ENCODE measurements at regions of chr20 and their contacts with region 1.

Region 1: GRCh38 chr20:51456511-51457509 is 85.7 kb downstream of the NFATC2 start:
- DNase-seq: peak; percentile 94
- H3K4me3 ChIP-seq: no peak overlapping the region
- H3K27ac ChIP-seq: peak overlapping the region; percentile 55 to 62
- H3K4me1 ChIP-seq: peaks cover 11% of the 10 kb centered on the region
- H3K27me3 ChIP-seq: no peaks in the 10 kb centered on the region
- CTCF ChIP-seq: peak in 1 of 4 experiments; percentile 11
- POLR2A ChIP-seq: no peak

Region 2: DNA sequence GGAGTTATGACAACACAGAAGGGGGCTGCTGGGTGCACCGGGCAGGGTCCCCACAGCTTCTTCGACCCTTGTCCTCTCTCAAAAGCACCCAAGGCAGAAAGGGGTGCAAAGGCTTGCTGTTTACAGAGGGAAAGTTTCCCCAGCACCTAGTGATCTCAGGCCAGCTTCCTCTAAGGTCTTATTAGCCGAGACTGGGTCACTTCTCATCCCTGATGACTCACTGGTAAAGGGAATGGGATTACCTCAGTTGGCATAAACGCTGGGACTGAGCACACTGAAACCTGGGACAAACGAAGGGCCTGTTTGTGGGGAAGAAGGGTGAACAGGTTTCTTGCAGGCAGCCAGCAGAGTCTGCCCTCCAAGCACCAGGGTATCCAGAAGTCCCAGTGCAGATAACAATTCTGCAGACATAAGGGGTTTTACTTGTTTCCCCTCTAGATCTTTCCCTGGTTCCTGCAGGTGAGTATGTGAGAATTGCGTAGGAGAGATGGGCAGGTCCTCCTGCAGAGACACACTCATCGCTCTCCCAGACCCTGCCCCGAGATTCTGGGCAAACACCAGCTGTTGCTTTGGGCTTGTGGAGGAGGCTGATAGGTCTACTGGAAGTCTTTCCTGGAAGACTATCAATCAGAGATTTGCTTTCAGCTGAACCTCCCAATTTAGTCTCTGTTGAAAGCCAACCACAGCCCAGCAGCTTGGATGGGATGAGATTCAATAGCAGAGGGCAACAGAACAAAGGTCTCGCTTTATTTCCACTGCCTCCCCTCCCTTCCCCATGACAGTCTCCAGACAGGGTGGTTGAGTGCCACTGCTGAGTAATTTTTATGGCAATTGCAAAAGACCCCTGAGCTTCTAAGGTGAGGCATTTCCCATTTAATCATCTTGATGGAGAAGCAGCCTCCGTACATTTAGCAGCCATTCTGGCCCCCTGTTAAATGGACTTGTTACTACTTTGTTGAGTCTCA is 459.6 kb before region 1 on chr20:
- intact Hi-C with region 1: no loop called
- DNase-seq: no peak
- H3K4me3 ChIP-seq: no peak overlapping the region
- H3K27ac ChIP-seq: no peak overlapping the region
- H3K4me1 ChIP-seq: no peaks in the 10 kb centered on the region
- H3K27me3 ChIP-seq: no peaks in the 10 kb centered on the region
- CTCF ChIP-seq: no peak
- POLR2A ChIP-seq: no peak

Region 3: GRCh38 chr20:51500311-51500710 is 43.5 kb after region 1 on chr20:
- intact Hi-C with region 1: no loop called
- DNase-seq: no peak
- H3K4me3 ChIP-seq: no peak overlapping the region
- H3K27ac ChIP-seq: no peak overlapping the region
- H3K4me1 ChIP-seq: no peaks in the 10 kb centered on the region
- H3K27me3 ChIP-seq: no peaks in the 10 kb centered on the region
- CTCF ChIP-seq: no peak
- POLR2A ChIP-seq: no peak

Region 4: DNA sequence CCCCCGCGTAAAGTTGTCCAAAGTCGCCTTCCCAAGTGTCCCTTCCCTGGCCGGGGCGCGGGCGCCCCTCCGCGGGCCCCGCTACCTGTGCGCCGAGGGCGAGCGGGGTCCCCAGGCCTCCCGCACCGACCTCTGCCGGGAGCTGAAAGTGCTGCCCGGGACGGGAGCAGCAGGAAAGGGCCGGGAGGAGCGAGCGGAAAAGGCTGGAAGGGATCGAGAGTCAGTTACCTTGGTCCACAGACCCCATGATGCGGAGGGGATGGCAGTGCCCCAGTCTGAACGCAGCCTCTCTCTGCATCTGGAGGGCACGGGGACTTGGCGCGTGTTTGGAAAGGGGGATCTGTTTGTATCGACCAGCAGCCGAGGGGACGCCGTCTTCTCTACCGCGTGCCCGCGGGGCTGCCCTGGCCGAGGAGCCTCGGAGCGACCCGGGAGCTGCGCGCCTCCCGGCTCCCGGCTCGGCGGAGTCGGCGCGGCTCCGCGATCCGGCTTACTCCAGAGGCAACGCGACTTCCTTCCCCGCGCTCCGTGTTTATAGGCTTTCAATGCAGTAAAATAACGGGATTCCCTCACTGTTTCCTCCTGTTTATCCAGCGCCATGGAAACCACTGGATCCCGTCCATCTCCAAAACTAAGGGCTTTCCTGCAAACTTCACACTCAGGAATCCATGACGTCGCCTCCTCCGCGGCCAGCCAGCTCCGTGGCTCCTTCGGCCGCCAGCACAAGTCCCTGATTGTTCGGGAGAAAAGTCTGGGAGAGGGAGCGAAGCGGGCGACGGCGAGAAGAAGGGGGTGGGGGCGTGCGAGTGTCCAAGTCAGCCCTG is 105.7 kb after region 1 on chr20:
- intact Hi-C with region 1: loop called (anchors 10 kb)
- DNase-seq: peak; percentile 68
- H3K4me3 ChIP-seq: peak overlapping the region; percentile 28 to 38
- H3K27ac ChIP-seq: peak overlapping the region; percentile 75 to 78
- H3K4me1 ChIP-seq: peaks cover 4% of the 10 kb centered on the region
- H3K27me3 ChIP-seq: no peaks in the 10 kb centered on the region
- CTCF ChIP-seq: no peak
- POLR2A ChIP-seq: no peak

Region 5: GRCh38 chr20:51650685-51651134 is 193.9 kb after region 1 on chr20:
- intact Hi-C with region 1: no loop called
- DNase-seq: no peak
- H3K4me3 ChIP-seq: no peak overlapping the region
- H3K27ac ChIP-seq: no peak overlapping the region
- H3K4me1 ChIP-seq: no peaks in the 10 kb centered on the region
- H3K27me3 ChIP-seq: no peaks in the 10 kb centered on the region
- CTCF ChIP-seq: no peak
- POLR2A ChIP-seq: no peak

Region 6: DNA sequence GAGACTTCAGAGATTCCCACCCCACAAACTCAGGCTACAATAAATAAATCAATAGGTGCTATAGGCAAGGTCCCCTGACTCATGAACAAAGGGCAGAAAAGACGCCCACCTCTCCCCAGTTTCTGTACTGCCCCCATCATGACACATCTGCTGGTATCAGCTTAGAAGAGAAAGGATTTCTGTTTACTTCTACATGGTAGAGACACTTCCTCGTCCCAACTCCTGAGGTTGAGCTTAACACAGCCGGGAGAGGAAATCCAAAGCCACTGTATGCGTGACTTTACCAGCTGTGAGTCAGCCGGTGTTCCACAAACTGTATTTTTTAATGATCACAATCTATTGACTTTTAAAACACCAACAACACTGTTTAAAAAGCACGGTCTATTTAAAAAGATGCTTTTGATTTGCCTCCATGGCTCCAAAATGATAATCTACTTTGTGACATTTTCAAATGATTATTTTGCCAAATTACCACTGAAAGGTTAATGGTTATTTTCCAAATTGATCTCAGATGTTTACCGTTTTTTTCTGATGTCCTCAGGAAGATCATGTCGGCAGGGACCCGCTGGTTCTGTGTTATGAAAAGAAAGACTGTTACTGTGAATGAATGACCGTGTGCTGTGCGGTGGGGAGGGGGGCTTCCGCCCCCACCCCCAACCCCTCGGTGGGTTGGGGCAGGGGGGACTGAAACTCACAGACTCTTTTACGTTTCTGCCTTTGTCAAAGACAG is 238.9 kb after region 1 on chr20:
- intact Hi-C with region 1: no loop called
- DNase-seq: peak; percentile 39
- H3K4me3 ChIP-seq: no peak overlapping the region
- H3K27ac ChIP-seq: peak overlapping the region; percentile 54 to 55
- H3K4me1 ChIP-seq: peaks cover 11% of the 10 kb centered on the region
- H3K27me3 ChIP-seq: no peaks in the 10 kb centered on the region
- CTCF ChIP-seq: no peak
- POLR2A ChIP-seq: no peak

Measured in prostate gland (tissue), 2 donors.